Activated CD8-positive, alpha-beta T cell treated with anti-CD3 and anti-CD28 coated beads for 36 hours (primary cell): ENCODE measurements at regions of chr11 and their contacts with region 1.

Region 1: GRCh38 chr11:73350908-73351636 is 25.1 kb upstream of the RELT start:
- DNase-seq: peak; percentile 74
- ATAC-seq: peak; percentile 94
- H3K4me3 Mint-ChIP-seq: no peak overlapping the region
- H3K27ac Mint-ChIP-seq: peak overlapping the region; percentile 41
- H3K4me1 Mint-ChIP-seq: peaks cover 2% of the 10 kb centered on the region
- H3K27me3 Mint-ChIP-seq: no peaks in the 10 kb centered on the region
- CTCF ChIP-seq: peak; percentile 97

Region 2: GRCh38 chr11:73223998-73224770 is 126.9 kb before region 1 on chr11:
- CTCF ChIA-PET with region 1: no interaction called
- POLR2A ChIA-PET with region 1: no interaction called
- intact Hi-C with region 1: no loop called
- DNase-seq: no peak
- ATAC-seq: no peak
- H3K4me3 Mint-ChIP-seq: no peak overlapping the region
- H3K27ac Mint-ChIP-seq: no peak overlapping the region
- H3K4me1 Mint-ChIP-seq: no peaks in the 10 kb centered on the region
- H3K27me3 Mint-ChIP-seq: peaks cover 4% of the 10 kb centered on the region
- CTCF ChIP-seq: no peak

Region 3: DNA sequence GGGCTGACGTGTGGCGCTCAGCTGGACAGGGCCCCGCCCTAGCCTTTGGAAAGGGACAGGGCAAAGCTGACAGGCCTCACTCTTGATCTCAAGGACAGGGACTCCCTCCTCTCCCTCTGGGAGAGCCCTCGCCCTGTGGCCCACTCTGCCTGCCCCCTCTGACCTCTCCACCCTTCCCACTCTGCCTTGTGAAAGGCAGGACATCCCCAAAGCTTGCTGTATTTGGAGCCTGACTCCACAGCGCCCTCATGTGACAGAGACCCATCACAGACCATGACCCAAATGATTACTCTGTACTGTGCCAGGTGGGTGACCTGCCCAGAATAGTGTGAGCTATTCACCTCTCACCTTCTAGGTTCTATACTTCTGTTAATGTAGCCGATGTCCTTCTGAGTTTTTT is 114.2 kb before region 1 on chr11:
- CTCF ChIA-PET with region 1: no interaction called
- POLR2A ChIA-PET with region 1: no interaction called
- intact Hi-C with region 1: no loop called
- DNase-seq: peak; percentile 67
- ATAC-seq: peak; percentile 89
- H3K4me3 Mint-ChIP-seq: no peak overlapping the region
- H3K27ac Mint-ChIP-seq: no peak overlapping the region
- H3K4me1 Mint-ChIP-seq: no peaks in the 10 kb centered on the region
- H3K27me3 Mint-ChIP-seq: peaks cover 2% of the 10 kb centered on the region
- CTCF ChIP-seq: peak; percentile 69

Region 4: GRCh38 chr11:73307323-73308002 is 43.6 kb before region 1 on chr11:
- CTCF ChIA-PET with region 1: interaction called, 19 read pairs
- POLR2A ChIA-PET with region 1: no interaction called
- intact Hi-C with region 1: no loop called
- DNase-seq: peak; percentile 97
- ATAC-seq: peak; percentile 81
- H3K4me3 Mint-ChIP-seq: peak overlapping the region; percentile 78
- H3K27ac Mint-ChIP-seq: no peak overlapping the region
- H3K4me1 Mint-ChIP-seq: peaks cover 6% of the 10 kb centered on the region
- H3K27me3 Mint-ChIP-seq: peaks cover 16% of the 10 kb centered on the region
- CTCF ChIP-seq: peak; percentile 62

Region 5: GRCh38 chr11:73376160-73376802 is 25.2 kb after region 1 on chr11 and contains the start of gene RELT:
- CTCF ChIA-PET with region 1: interaction called, 28 read pairs
- POLR2A ChIA-PET with region 1: interaction called, 4 read pairs
- intact Hi-C with region 1: no loop called
- DNase-seq: peak; percentile 92
- ATAC-seq: peak; percentile 96
- H3K4me3 Mint-ChIP-seq: peak within 1 kb of the TSS; percentile 100
- H3K27ac Mint-ChIP-seq: peak within 1 kb of the TSS; percentile 98
- H3K4me1 Mint-ChIP-seq: peaks cover 41% of the 10 kb centered on the region
- H3K27me3 Mint-ChIP-seq: no peaks in the 10 kb centered on the region
- CTCF ChIP-seq: peak; percentile 99
- total RNA-seq, gene RELT: 26.6 to 29.6 TPM

Region 6: DNA sequence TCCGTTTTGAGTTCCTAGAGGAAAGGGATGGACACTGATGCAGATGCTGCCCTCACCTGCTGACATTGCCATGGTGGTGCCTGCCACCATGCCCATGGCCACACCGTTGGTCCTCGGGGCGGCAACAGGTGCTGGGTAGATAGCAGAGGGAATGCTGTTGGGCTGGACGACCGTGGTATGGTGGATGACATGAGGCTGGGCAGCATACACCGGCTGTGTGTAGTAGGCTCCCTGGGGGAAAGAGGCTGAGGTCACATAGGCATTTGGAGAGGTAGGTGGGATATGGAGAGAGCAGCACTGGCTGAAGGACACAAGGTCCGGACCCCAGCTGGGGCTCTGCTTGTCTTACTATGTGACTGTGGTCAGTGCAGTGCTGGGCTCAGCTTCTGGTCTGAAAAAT is 58.4 kb after region 1 on chr11:
- CTCF ChIA-PET with region 1: interaction called, 15 read pairs
- POLR2A ChIA-PET with region 1: no interaction called
- intact Hi-C with region 1: no loop called
- DNase-seq: no peak
- ATAC-seq: no peak
- H3K4me3 Mint-ChIP-seq: no peak overlapping the region
- H3K27ac Mint-ChIP-seq: peak overlapping the region; percentile 6
- H3K4me1 Mint-ChIP-seq: no peaks in the 10 kb centered on the region
- H3K27me3 Mint-ChIP-seq: no peaks in the 10 kb centered on the region
- CTCF ChIP-seq: no peak

Region 7: DNA sequence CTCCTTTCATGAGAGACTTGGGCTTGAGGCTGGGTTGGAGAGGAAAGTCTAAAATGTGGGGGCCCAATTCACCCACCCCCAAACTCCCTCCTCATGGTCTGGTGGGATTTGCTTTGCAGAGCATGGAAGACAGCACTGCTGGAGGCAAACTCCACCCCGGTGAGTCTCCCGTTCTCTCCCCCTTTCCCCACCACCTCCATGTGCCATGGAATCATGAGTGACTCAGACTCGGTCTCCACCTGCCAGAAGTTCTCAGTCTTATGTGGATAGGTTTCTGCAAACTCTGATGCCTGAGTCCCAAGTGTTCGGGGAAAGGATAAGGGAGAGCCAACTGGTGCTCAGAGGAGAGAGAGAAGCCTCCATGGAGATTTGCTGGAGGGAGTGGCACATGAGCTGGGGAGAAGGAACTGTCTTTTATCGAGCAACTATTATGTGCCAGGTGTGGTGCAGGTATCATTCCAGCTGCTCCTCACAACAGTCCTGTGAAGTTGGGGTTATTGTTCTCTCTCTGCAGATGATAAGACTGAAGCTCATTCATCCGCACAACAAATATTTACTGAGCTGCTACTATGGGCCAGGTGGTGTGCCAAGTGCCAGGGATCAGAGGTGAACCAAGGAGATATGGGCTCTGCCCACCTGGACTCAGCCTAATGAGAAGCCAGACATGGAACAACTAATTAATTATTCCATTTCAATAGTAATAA is 301.9 kb after region 1 on chr11:
- CTCF ChIA-PET with region 1: interaction called, 10 read pairs
- POLR2A ChIA-PET with region 1: no interaction called
- intact Hi-C with region 1: no loop called
- DNase-seq: no peak
- ATAC-seq: no peak
- H3K4me3 Mint-ChIP-seq: no peak overlapping the region
- H3K27ac Mint-ChIP-seq: no peak overlapping the region
- H3K4me1 Mint-ChIP-seq: peaks cover 2% of the 10 kb centered on the region
- H3K27me3 Mint-ChIP-seq: no peaks in the 10 kb centered on the region
- CTCF ChIP-seq: no peak

Region 8: GRCh38 chr11:73856031-73856567 is 505.0 kb after region 1 on chr11:
- CTCF ChIA-PET with region 1: no interaction called
- POLR2A ChIA-PET with region 1: no interaction called
- intact Hi-C with region 1: no loop called
- DNase-seq: no peak
- ATAC-seq: no peak
- H3K4me3 Mint-ChIP-seq: no peak overlapping the region
- H3K27ac Mint-ChIP-seq: no peak overlapping the region
- H3K4me1 Mint-ChIP-seq: no peaks in the 10 kb centered on the region
- H3K27me3 Mint-ChIP-seq: no peaks in the 10 kb centered on the region
- CTCF ChIP-seq: no peak